ENCODE measurements at regions of chr17 and their contacts with region 1.

Region 1: GRCh38 chr17:45197555-45198334 is 23.9 kb upstream of the FMNL1 start:
- DNase-seq: peak; percentile 93
- H3K4me3 ChIP-seq: peak overlapping the region; percentile 19
- H3K27ac ChIP-seq: peak overlapping the region; percentile 76
- H3K4me1 ChIP-seq: peaks cover 21% of the 10 kb centered on the region
- H3K27me3 ChIP-seq: no peaks in the 10 kb centered on the region
- CTCF ChIP-seq: peak; percentile 99

Region 2: DNA sequence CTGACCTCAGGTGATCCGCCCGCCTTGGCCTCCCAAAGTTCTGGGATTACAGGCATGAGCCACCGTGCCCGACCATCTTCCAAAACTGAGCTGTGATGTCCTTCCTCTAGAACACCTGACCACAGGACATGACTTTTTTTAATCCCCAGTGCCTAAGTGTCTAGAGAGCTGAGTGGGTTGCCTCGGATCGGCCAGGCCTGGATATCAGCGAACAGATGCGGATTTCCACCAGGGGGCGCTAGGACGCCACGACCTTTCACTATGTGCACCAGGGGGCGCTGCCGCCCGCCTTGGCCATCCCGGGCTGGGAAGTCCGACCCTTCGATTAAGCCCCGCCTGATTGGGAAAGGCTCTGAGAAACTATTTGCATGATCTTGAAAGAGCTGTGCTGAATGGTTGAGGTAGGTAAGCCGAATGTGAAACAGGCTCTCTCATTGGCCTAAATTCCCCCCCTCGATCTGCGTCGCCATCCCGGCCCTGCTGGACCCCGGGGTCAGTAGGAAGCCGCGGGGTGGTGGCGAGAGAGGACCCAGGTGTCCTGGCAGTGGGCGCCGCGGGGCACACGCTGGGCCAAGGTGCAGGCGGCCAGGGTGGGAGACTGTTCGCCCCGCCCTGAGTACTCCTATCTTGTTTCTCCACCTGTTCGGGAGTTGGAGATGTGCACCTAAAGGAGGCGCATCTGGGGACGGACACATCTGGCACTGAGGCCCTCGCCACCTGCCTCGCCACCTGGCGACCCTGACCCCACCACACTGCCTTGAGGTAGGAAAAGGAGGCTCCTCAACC is 62.4 kb before region 1 on chr17 and contains the start of gene ACBD4:
- intact Hi-C with region 1: loop called (anchors 5 kb)
- DNase-seq: peak; percentile 94
- H3K4me3 ChIP-seq: peak within 1 kb of the TSS; percentile 91
- H3K27ac ChIP-seq: peak within 1 kb of the TSS; percentile 81
- H3K4me1 ChIP-seq: peaks cover 48% of the 10 kb centered on the region
- H3K27me3 ChIP-seq: no peaks in the 10 kb centered on the region
- CTCF ChIP-seq: peak; percentile 100
- total RNA-seq, gene ACBD4: 6.4 TPM

Measured in left ventricle myocardium inferior (tissue), 1 donor.